SK-N-SH (cell line): ENCODE measurements at regions of chr16 and their contacts with region 1.

Region 1: GRCh38 chr16:55465077-55465896 is 13.7 kb upstream of the MMP2 start:
- DNase-seq: peak; percentile 81
- H3K4me3 ChIP-seq: peak overlapping the region in 1 of 2 experiments; percentile 56; a peak in 1 of 4 replicates
- H3K27ac ChIP-seq: no peak overlapping the region
- H3K4me1 ChIP-seq: peaks cover 0 to 2% of the 10 kb centered on the region in 2 experiments; a peak in 2 of 4 replicates
- H3K27me3 ChIP-seq: no peaks in the 10 kb centered on the region
- CTCF ChIP-seq: peak; percentile 100
- EP300 ChIP-seq: no peak
- RAD21 ChIP-seq: peak; percentile 100

Region 2: DNA sequence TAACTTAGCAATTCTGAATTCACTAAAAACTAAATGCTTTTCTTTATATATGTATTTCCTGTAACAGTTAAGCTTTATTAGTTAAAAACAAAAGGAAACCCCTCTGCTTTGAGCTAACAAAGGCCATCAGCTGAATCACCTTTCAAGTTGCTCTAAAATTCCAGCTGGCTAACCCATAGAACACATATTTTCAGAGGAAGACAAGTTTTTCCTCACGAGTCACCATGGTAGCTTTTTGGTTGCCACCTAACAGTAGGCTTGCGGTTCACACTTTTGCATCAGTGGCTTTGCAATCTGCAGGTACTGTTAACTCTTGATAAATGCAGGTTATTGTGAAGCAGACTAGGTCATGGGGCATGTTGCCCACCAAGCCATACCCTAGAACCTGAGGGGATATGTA is 592.2 kb before region 1 on chr16:
- CTCF ChIA-PET with region 1: no interaction called
- POLR2A ChIA-PET with region 1: no interaction called
- DNase-seq: no peak
- H3K4me3 ChIP-seq: no peak overlapping the region
- H3K27ac ChIP-seq: no peak overlapping the region
- H3K4me1 ChIP-seq: no peaks in the 10 kb centered on the region
- H3K27me3 ChIP-seq: no peaks in the 10 kb centered on the region
- CTCF ChIP-seq: no peak
- EP300 ChIP-seq: no peak
- RAD21 ChIP-seq: no peak

Region 3: DNA sequence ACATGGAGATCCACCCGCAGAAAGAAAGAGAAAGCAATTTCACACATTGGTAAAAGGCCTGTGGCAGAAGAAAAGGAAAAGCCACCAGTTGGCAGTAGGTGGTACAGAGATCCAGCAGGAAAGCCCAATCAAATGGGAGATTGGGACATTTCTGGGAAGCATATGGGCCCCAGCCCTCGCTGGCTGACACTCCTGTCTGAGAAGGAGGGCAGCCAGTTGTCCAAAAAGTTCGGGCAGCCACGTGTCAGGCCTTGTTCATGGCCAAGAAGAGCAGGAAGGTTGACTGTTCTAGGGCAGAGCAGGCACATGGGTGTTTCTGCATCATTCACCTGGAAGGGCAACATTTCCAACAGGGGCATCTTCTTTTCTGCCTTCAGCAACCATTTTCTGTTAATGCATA is 31.3 kb before region 1 on chr16:
- CTCF ChIA-PET with region 1: no interaction called
- POLR2A ChIA-PET with region 1: no interaction called
- DNase-seq: no peak
- H3K4me3 ChIP-seq: no peak overlapping the region
- H3K27ac ChIP-seq: no peak overlapping the region
- H3K4me1 ChIP-seq: no peaks in the 10 kb centered on the region; a peak in 1 of 4 replicates
- H3K27me3 ChIP-seq: no peaks in the 10 kb centered on the region
- CTCF ChIP-seq: no peak
- EP300 ChIP-seq: no peak
- RAD21 ChIP-seq: no peak

Region 4: DNA sequence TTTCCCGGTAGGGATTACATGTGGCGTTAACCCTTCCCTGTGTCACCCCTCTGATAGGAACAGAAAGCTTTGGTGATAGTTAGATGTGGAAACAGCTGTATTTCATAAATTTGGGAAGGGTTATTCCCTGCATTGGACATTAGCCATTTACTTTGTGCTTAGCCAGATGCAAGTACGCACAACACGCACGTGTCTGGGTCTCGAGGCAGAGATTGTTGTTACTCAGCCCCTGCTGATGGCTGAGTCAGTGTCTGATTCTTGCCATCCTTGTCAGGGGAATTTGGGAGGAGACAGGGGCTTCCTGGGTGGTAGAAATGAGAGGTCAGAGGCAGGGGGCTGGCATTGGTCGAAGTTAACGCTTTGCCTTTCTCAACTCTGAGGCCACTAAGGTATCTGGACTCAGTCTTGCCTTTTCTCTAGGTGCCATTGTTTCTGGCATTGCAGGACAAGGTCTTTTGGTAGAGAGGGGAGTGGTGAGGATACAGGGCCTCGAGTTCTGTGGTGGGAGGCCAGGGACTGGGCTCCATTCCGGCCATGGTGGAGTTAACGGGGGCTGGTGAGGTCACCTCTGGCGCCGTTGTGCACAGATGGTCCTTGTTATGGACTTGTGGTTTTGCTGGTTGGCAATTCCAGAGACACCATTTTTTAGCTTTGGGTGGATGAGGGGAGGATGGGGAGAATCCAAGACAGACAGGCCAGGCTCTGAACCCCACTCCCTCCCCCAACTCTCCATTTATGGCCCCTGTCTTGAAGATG is 21.9 kb after region 1 on chr16:
- CTCF ChIA-PET with region 1: interaction called, 25 read pairs
- POLR2A ChIA-PET with region 1: no interaction called
- DNase-seq: no peak
- H3K4me3 ChIP-seq: no peak overlapping the region
- H3K27ac ChIP-seq: peak overlapping the region; percentile 81 to 91
- H3K4me1 ChIP-seq: peaks cover 19 to 31% of the 10 kb centered on the region in 2 experiments; a peak in 3 of 4 replicates
- H3K27me3 ChIP-seq: no peaks in the 10 kb centered on the region
- CTCF ChIP-seq: no peak
- EP300 ChIP-seq: peak in 1 of 2 experiments; percentile 88; a peak in 2 of 4 replicates
- RAD21 ChIP-seq: no peak

Region 5: DNA sequence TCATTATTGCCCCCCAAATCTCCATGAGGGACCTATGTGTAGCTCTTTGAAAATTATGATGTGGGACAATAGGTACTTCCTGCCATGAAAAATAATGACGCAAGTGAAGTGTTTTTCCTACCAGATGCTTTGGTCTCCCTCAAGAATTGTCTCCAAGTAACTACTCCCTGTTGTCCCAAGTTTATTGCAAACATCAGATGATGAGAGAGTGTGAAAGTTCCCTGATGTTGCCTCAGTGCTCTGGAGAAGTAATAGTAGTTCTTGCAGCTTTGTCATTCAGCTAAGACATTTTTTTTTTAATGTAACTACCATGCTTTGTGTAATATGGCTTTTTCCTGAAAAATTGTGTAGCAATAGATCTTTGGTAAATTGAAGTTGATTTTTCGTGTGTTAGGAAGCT is 63.7 kb after region 1 on chr16:
- CTCF ChIA-PET with region 1: interaction called, 115 read pairs
- POLR2A ChIA-PET with region 1: no interaction called
- DNase-seq: no peak
- H3K4me3 ChIP-seq: no peak overlapping the region
- H3K27ac ChIP-seq: no peak overlapping the region
- H3K4me1 ChIP-seq: peaks cover 0 to 2% of the 10 kb centered on the region in 2 experiments; a peak in 2 of 4 replicates
- H3K27me3 ChIP-seq: no peaks in the 10 kb centered on the region
- CTCF ChIP-seq: no peak
- EP300 ChIP-seq: no peak
- RAD21 ChIP-seq: no peak

Region 6: DNA sequence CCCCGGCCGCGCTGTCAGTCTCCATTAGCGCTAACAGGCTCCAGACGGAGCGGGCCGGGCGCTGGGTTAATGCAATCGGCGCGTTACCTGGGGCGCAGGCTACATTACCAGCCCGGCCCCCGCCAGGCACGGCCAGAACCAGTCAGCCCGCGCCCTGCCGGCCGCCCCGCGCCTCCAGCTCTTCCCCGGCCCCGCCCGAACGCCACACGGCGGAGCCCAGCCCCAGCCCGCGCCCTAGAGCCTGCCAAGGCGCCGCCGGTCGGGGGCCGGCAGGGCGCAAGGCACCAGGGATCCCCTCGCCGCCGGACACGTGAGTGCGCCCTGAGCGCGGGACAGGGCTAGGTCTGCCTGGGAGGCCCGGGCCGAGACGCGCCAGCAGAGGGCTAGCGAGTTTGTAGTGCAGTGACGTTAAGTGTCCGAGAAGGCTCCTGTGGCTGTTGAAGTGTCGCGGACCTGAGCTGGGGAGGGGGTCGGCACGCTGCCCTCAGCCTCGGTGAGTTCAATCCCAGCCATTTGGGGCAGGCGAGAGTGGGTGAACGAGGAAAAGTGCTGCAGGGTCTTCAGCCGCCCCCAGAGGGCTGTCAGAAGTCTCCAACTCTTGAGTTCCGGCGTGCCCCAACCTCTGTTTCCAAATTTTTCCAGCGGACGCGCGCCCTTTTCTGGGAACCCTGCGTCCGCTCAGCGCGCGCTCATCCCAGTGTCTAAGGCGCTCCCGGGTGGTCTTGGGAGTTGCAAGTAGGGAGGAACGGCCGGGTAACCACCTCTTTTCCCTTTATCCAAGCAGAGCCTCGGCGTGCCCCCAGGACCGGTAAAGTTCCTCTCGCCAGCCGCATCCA is 190.8 kb after region 1 on chr16 and contains the start of gene SLC6A2:
- CTCF ChIA-PET with region 1: interaction called, 15 read pairs
- POLR2A ChIA-PET with region 1: interaction called, 3 read pairs
- DNase-seq: peak; percentile 95
- H3K4me3 ChIP-seq: peak within 1 kb of the TSS in 1 of 2 experiments; percentile 59; a peak in 2 of 4 replicates
- H3K27ac ChIP-seq: peak within 1 kb of the TSS; percentile 22 to 100; a peak in 2 of 4 replicates
- H3K4me1 ChIP-seq: peaks cover 0 to 58% of the 10 kb centered on the region in 2 experiments; a peak in 2 of 4 replicates
- H3K27me3 ChIP-seq: peaks cover 12% of the 10 kb centered on the region
- CTCF ChIP-seq: no peak
- EP300 ChIP-seq: peak in 1 of 2 experiments; percentile 90; a peak in 2 of 4 replicates
- RAD21 ChIP-seq: no peak
- polyA plus RNA-seq, gene SLC6A2: 3.3 and 12.7 TPM in 2 replicates

Region 7: GRCh38 chr16:55835581-55835980 is 370.3 kb after region 1 on chr16:
- CTCF ChIA-PET with region 1: interaction called, 124 read pairs
- POLR2A ChIA-PET with region 1: no interaction called
- DNase-seq: peak; percentile 39
- H3K4me3 ChIP-seq: no peak overlapping the region
- H3K27ac ChIP-seq: no peak overlapping the region
- H3K4me1 ChIP-seq: peaks cover 0 to 8% of the 10 kb centered on the region in 2 experiments; a peak in 1 of 4 replicates
- H3K27me3 ChIP-seq: no peaks in the 10 kb centered on the region
- CTCF ChIP-seq: no peak
- EP300 ChIP-seq: 0 out of 4 replicates have a peak, but pooled peaks of 1 of the 2 experiments have one; percentile 11
- RAD21 ChIP-seq: no peak

Region 8: DNA sequence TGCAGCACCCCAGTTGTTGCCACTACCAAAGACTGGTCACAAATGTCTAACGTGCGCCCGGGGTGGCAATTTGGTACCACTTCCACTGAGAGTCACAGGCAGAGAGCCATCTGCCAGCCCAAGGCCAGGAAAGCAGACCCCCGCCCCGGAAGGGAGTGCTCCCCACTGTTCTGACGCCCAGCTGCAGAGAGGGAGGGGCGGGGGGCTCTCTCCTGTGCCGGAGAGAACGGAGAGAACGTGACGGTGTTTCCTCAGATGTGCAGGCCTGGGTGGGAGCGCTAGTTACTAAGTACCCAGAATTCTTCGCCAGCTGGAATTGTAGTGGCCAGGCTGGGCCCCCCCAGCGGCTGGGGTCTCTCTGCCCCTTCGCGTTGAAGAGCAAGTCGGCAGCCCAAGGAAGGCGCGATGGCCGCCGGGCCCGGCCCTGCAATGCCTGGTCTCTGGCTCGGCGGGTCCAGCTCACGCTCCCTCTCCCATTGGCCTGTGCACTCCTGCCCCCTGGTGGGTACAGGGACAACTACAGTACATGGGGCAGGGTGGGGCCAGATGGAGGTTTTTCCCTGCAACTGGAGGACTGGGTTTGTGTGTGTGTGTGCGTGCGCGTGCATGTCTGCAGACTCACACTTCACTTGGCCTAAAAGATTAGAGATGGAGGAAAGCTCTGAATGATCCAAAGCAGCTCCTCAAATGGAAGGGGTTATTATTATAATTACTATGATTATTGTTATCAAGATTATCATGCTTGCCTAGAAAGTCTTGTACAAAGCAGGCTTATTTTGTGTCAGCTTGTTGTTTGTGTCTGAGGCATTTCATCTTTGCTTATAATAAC is 852.9 kb after region 1 on chr16:
- CTCF ChIA-PET with region 1: interaction called, 13 read pairs
- POLR2A ChIA-PET with region 1: no interaction called
- DNase-seq: peak; percentile 97
- H3K4me3 ChIP-seq: no peak overlapping the region; a peak in 1 of 4 replicates
- H3K27ac ChIP-seq: peak overlapping the region in 1 of 2 experiments; percentile 16; a peak in 1 of 4 replicates
- H3K4me1 ChIP-seq: peaks cover 0 to 25% of the 10 kb centered on the region in 2 experiments; a peak in 1 of 4 replicates
- H3K27me3 ChIP-seq: no peaks in the 10 kb centered on the region; the same call in 1 of the 2 replicates
- CTCF ChIP-seq: peak; percentile 84
- EP300 ChIP-seq: no peak
- RAD21 ChIP-seq: peak; percentile 96